ENCODE measurements at regions of chr18 and their contacts with region 1.

Region 1: GRCh38 chr18:5890331-5891183 is 4.8 kb downstream of the TMEM200C start:
- DNase-seq: peak; percentile 47
- ATAC-seq: peak; percentile 92 to 93

Region 2: DNA sequence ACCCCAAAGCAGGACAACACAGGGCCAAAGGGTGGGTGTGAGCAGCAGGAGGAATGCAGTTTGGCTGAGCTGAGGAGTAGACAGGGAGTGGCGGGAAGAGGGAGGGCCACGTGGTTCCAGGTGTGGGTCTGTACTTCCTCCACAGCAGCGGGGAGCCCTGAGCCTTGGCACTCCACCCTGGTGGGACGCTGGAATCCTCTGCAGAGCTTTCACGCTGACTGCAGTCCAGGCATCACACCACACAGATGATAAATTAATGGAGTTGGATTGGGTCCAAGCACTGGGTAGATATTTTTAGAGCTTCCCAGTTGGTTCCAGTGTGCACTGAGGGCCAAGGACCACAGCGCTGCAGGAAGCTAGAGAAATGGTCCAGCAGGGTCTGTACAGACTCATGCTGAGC is 71.8 kb after region 1 on chr18:
- intact Hi-C with region 1: loop called in 1 of 2 experiments (anchors 5 kb)
- DNase-seq: no peak
- ATAC-seq: peak; percentile 39 to 57

Region 3: DNA sequence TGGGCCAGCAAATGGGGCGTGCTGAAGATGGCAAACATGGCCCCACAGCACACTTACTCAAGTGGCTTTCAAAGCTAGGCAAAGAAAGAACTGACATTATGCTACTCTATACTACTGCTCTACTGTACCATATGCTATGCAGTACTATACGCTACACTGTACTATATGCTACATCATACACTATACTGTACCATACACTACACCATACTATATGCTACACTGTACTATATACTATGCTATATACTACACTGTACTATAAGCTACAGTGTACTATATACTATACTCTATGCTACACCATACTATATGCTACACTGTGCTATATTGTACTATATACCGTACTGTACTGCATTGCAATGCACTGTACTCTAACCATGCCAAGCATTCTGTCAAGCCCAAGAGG is 248.4 kb after region 1 on chr18:
- intact Hi-C with region 1: loop called in 1 of 2 experiments (anchors 10 kb)
- DNase-seq: no peak
- ATAC-seq: no peak

Measured in left cardiac atrium (tissue), 4 donors.